ENCODE measurements at regions of chr10 and their contacts with region 1.

Region 1: DNA sequence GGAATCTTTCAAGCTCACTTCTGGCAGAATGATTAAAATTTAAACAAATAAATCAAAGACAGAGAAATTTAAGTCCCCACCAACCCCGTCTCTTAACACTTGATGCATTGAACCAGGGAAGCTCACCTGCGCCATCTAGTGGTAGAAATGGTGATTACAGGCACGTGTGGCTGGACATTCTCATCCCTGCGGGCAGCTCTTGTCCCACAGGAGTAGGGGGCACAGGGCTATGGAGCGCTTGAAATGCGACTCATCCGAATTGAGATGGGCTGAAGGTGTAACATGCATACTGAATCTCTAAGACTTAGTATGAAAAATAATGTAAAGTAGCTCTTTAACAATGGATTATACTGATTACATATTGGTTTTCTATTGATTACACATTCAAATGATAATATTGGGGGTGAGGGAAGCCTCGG is 24.8 kb upstream of the SLIT1 start:
- DNase-seq: peak; percentile 57
- ATAC-seq: peak; percentile 66
- H3K4me3 Mint-ChIP-seq: no peak overlapping the region
- H3K27ac Mint-ChIP-seq: no peak overlapping the region
- H3K4me1 Mint-ChIP-seq: no peaks in the 10 kb centered on the region
- H3K27me3 Mint-ChIP-seq: peaks cover 7% of the 10 kb centered on the region
- CTCF ChIP-seq: peak; percentile 41

Region 2: DNA sequence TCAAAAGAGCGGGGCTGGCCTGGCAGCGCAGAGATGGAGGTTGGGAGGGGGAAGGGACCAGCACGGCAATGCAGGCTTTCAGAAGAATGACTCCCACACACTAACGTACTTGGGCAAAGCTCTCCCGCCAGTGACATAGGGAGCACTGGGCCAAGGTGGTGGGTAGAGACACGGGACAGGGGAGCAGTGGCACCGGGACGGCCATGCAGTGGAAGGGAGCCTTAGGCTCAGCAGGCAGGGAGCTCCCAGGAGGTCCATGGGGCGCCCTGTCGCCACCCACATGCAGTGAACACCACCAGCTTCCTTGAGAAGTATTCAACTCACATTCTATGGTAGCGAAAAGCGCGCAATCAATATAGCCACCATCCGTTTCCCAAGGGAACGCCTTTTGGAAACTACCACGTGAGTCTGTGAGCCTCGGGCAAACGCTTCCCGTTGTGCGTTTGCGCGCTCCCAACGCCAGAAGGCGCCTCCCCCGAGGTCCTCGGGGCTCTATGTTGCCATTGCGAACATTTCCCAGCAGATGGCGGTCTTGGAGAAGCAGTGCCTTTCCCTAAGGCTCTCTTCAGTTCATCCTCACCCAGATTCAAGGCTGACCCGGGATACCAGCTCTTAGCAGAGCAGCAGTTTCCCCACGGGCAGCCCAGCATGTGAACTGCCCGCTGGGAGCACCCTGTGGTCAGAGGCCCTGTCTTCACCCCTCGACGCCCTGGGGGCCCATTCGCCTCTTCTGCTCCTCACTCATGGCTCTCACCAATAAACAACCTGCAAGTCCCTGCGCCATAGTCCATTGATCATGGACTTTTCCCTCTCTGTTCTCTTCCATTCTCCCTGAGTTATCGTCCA is 835.3 kb before region 1 on chr10:
- CTCF ChIA-PET with region 1: interaction called, 3 read pairs
- POLR2A ChIA-PET with region 1: no interaction called
- intact Hi-C with region 1: loop called (anchors 1 kb)
- DNase-seq: peak; percentile 61
- ATAC-seq: peak; percentile 92
- H3K4me3 Mint-ChIP-seq: peak overlapping the region; percentile 78
- H3K27ac Mint-ChIP-seq: no peak overlapping the region
- H3K4me1 Mint-ChIP-seq: peaks cover 6% of the 10 kb centered on the region
- H3K27me3 Mint-ChIP-seq: peaks cover 13% of the 10 kb centered on the region
- CTCF ChIP-seq: peak; percentile 84

Region 3: GRCh38 chr10:97037365-97038361 is 172.9 kb before region 1 on chr10:
- CTCF ChIA-PET with region 1: interaction called, 31 read pairs
- POLR2A ChIA-PET with region 1: no interaction called
- intact Hi-C with region 1: loop called (anchors 1 kb)
- DNase-seq: peak; percentile 63
- ATAC-seq: peak; percentile 96
- H3K4me3 Mint-ChIP-seq: peak overlapping the region; percentile 83
- H3K27ac Mint-ChIP-seq: peak overlapping the region; percentile 41
- H3K4me1 Mint-ChIP-seq: peaks cover 12% of the 10 kb centered on the region
- H3K27me3 Mint-ChIP-seq: peaks cover 17% of the 10 kb centered on the region
- CTCF ChIP-seq: peak; percentile 91

Region 4: DNA sequence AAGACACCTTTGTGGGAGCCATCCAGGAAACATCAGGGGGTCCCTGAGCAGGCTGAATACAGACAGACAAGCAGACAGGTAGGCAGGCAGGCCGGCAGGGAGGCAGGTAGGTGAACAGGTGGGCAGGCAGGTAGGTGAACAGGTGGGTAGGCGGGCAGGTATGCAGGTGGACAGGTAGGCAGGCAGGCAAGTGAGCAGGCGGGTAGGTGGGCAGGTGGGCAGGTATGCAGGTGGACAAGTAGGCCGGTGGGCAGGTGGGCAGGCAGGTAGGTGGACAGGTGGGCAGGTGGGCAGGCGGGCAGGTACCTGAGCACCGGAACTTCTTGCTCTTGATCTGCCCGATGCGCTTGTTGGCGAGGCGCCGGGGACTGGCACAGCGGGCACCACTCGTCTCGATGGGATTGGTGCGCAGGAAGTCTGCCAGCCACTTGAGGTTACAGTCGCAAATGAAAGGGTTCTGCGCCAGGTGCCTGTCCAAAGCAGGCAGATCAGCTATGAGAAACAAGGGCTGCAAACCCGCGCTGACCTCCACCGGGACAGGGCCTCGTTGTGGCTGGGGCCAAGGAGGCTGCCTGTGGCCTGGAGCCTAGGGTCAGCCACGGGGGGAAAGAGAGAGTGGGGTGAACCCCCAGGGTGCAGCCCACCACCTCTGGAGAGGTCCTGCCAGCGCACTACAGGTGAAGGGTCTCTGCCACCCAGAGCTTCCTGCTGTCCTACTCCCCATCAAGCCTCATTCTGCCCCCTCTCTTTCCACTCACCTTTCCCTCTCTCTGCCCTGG is 161.7 kb before region 1 on chr10:
- CTCF ChIA-PET with region 1: no interaction called
- POLR2A ChIA-PET with region 1: no interaction called
- intact Hi-C with region 1: no loop called
- DNase-seq: no peak
- ATAC-seq: no peak
- H3K4me3 Mint-ChIP-seq: no peak overlapping the region
- H3K27ac Mint-ChIP-seq: no peak overlapping the region
- H3K4me1 Mint-ChIP-seq: peaks cover 11% of the 10 kb centered on the region
- H3K27me3 Mint-ChIP-seq: peaks cover 5% of the 10 kb centered on the region
- CTCF ChIP-seq: no peak

Region 5: GRCh38 chr10:97081621-97082235 is 128.8 kb before region 1 on chr10:
- CTCF ChIA-PET with region 1: interaction called, 29 read pairs
- POLR2A ChIA-PET with region 1: no interaction called
- intact Hi-C with region 1: no loop called
- DNase-seq: peak; percentile 48
- ATAC-seq: no peak
- H3K4me3 Mint-ChIP-seq: no peak overlapping the region
- H3K27ac Mint-ChIP-seq: peak overlapping the region; percentile 9
- H3K4me1 Mint-ChIP-seq: no peaks in the 10 kb centered on the region
- H3K27me3 Mint-ChIP-seq: peaks cover 41% of the 10 kb centered on the region
- CTCF ChIP-seq: no peak

Region 6: GRCh38 chr10:97179731-97180362 is 30.7 kb before region 1 on chr10:
- CTCF ChIA-PET with region 1: no interaction called
- POLR2A ChIA-PET with region 1: no interaction called
- intact Hi-C with region 1: no loop called
- DNase-seq: no peak
- ATAC-seq: no peak
- H3K4me3 Mint-ChIP-seq: no peak overlapping the region
- H3K27ac Mint-ChIP-seq: no peak overlapping the region
- H3K4me1 Mint-ChIP-seq: peaks cover 4% of the 10 kb centered on the region
- H3K27me3 Mint-ChIP-seq: peaks cover 36% of the 10 kb centered on the region
- CTCF ChIP-seq: no peak

Region 7: DNA sequence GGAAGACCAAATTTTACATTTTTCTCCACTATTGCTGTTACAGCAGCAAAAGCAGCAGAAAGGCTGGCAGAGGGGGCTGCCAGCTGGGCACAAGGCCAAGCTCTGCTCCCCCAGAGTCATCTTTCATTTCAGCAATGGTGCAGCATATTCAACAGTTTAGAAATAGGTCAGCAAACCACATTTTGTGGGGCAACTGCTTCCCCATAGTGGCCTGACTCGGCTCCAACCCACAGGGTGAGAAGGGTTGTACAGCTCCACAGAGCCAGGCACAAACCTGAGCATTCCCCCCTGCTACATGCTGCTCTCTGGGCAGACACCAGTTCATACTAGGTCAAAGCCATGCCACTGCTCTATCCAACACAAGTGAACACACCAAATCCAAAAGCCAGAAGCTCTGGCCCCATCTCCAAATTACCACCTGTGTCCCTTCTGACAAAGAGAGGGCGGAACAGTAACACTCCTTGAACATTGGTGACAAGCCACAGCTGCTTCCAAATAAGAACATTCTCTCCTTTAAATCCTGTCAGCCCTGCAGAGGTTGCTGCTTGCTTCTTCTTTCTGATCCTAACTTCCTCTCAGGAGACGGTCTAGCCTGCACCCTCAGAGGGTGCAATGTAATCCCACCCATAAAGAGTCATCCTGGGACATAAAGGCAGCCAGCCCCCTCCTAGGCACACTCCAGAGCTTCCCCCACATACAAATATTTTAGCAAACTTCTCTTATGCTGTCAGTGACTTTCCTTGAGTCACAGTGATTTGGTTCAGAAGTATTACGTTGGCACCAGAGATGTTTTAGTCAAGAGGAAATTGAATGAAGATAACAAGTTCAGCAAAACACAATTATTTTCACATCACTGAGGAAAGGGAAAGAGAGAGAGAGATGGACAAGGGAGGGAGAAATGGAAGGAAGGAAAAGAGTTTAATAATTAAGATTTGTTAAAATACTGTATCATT is 14.2 kb after region 1 on chr10:
- CTCF ChIA-PET with region 1: interaction called, 11 read pairs
- POLR2A ChIA-PET with region 1: no interaction called
- intact Hi-C with region 1: no loop called
- DNase-seq: no peak
- ATAC-seq: no peak
- H3K4me3 Mint-ChIP-seq: no peak overlapping the region
- H3K27ac Mint-ChIP-seq: no peak overlapping the region
- H3K4me1 Mint-ChIP-seq: no peaks in the 10 kb centered on the region
- H3K27me3 Mint-ChIP-seq: no peaks in the 10 kb centered on the region
- CTCF ChIP-seq: no peak

Region 8: DNA sequence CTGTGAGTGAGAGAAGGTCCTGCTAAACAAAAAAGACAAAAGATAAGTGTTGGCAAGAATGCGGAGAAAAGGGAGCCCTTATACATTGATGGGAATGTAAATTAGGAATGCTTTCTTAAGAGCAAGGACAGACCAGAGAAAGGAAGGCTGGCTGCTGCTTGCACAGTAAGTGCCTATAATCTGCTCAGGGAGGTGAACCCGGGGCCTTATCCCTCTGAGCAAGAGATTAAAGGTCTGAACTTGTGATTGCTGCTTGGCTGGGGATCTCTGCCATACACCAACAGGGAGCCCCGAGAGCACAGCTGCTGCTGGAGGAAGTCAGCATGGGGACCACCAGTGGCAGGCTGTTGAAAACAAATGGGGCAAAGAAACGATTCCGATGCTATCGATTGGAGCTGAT is 851.9 kb after region 1 on chr10:
- CTCF ChIA-PET with region 1: no interaction called
- POLR2A ChIA-PET with region 1: no interaction called
- intact Hi-C with region 1: no loop called
- DNase-seq: no peak
- ATAC-seq: no peak
- H3K4me3 Mint-ChIP-seq: no peak overlapping the region
- H3K27ac Mint-ChIP-seq: no peak overlapping the region
- H3K4me1 Mint-ChIP-seq: no peaks in the 10 kb centered on the region
- H3K27me3 Mint-ChIP-seq: peaks cover 24% of the 10 kb centered on the region
- CTCF ChIP-seq: no peak